H1 (cell line): ENCODE measurements at regions of chr15 and their contacts with region 1.

Region 1: DNA sequence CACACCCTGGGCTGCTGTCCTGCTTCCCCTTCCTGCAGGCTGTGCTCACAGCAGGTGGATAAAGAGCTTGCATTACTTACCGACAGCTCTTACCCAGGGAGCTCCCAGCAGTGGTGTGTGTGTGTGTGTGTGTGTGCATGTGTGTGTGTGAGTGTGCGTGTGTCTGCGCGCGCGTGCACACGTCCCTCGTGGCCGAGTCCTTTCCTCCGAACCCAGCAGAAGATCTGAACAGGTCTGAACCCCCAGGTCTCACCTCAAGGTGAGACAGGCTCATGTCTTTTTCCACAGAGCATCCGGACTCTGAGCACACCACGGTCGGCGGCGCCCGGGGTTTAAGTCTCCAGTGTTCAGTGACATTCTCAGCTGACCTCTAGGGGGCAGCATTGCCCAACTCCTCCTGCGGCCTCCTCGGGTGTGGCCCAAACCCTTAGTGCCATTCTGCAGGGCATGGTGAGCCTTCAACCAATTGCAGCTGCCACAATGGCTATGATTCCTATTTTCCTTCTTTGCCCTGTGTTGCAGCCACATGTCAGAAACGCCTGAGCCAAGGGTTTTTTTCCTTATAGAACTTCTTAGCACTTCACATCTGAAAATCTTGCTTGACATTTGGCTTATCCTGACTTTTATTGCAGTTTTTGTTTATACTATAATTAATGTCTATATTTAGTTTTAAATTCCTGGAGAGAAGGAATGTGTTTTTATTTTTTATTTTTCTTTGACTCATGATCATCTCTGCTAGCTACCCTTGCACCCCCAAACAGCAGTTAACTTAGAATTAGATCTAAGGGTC is 64.1 kb upstream of the KLHL25 start:
- DNase-seq: peak; percentile 53 to 90
- H3K4me3 ChIP-seq: peak overlapping the region; percentile 12 to 52 (median 34); a peak in 6 of 8 replicates
- H3K27ac ChIP-seq: no peak overlapping the region
- H3K4me1 ChIP-seq: peaks cover 0 to 9% (median 1%) of the 10 kb centered on the region in 4 experiments; a peak in 4 of 7 replicates
- H3K27me3 ChIP-seq: no peaks in the 10 kb centered on the region
- CTCF ChIP-seq: peak; percentile 80 to 86 (median 86)
- EP300 ChIP-seq: no peak
- POLR2A ChIP-seq: no peak
- RAD21 ChIP-seq: peak; percentile 86 to 89

Region 2: DNA sequence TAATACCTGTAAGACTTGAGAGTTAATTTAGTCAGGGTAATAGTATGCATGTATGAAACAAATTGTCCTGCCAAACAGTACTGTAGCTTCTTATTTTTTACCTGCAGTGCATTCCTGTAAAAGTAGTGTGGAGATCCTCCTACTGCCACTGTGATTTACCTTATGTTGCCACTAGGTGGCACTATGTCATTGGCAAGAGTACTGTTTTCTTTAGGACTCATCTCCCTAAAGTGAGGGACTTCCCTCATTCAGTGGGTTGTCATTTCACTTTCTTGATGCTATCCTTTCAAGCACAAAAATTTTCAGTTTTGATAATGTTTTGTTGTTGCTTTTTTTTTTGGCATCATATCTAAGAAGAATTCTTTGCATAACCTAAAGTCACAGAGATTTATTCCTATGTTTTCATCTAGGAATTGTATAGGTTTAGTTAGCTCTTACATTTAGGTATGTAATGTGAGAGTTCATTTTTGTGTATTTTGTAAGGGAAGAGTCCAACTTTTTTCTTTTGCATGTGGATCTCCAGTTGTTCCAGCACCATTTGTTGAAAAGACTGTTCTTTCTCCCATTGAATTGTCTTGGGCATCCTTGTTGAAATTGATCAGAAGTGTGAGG is 372.7 kb before region 1 on chr15:
- CTCF ChIA-PET with region 1: no interaction called
- POLR2A ChIA-PET with region 1: no interaction called
- DNase-seq: peak in 1 of 2 experiments; percentile 69
- H3K4me3 ChIP-seq: no peak overlapping the region
- H3K27ac ChIP-seq: no peak overlapping the region
- H3K4me1 ChIP-seq: peaks cover 0 to 4% (median 0%) of the 10 kb centered on the region in 4 experiments; a peak in 2 of 7 replicates
- H3K27me3 ChIP-seq: no peaks in the 10 kb centered on the region
- CTCF ChIP-seq: peak in 2 of 3 experiments; percentile 68 to 72; a peak in 3 of 4 replicates
- EP300 ChIP-seq: no peak
- POLR2A ChIP-seq: no peak
- RAD21 ChIP-seq: peak; percentile 77 to 82

Region 3: DNA sequence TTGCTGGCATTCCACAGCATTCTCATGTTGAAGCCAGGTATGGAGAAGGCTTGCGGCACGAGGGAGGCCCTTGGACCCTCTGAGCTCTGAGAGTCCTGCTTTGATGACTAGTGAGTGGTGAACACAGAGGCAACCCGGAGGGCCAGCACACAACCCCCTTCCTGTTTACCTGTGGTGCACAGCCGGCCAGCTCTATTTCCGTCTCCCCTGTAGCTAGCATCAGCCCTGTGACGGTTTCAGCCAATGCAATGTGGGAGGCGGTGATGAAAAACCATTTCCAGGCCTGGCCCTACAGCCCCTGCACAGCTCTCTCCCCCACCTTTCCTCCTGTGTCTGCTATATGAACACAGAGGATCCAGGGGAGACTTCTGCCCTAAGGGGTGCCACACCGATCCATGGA is 12.8 kb after region 1 on chr15:
- CTCF ChIA-PET with region 1: interaction called, 25 read pairs
- POLR2A ChIA-PET with region 1: no interaction called
- DNase-seq: no peak
- H3K4me3 ChIP-seq: no peak overlapping the region
- H3K27ac ChIP-seq: no peak overlapping the region
- H3K4me1 ChIP-seq: no peaks in the 10 kb centered on the region
- H3K27me3 ChIP-seq: no peaks in the 10 kb centered on the region
- CTCF ChIP-seq: no peak
- EP300 ChIP-seq: no peak
- POLR2A ChIP-seq: no peak
- RAD21 ChIP-seq: no peak

Region 4: GRCh38 chr15:86014016-86014415 is 155.2 kb after region 1 on chr15:
- CTCF ChIA-PET with region 1: no interaction called
- POLR2A ChIA-PET with region 1: no interaction called
- DNase-seq: no peak
- H3K4me3 ChIP-seq: no peak overlapping the region
- H3K27ac ChIP-seq: no peak overlapping the region
- H3K4me1 ChIP-seq: no peaks in the 10 kb centered on the region
- H3K27me3 ChIP-seq: no peaks in the 10 kb centered on the region; a peak in 1 of 7 replicates
- CTCF ChIP-seq: no peak
- EP300 ChIP-seq: no peak
- POLR2A ChIP-seq: no peak
- RAD21 ChIP-seq: no peak

Region 5: GRCh38 chr15:86231864-86232721 is 373.3 kb after region 1 on chr15:
- CTCF ChIA-PET with region 1: interaction called, 16 read pairs
- POLR2A ChIA-PET with region 1: no interaction called
- DNase-seq: peak in 1 of 2 experiments; percentile 66
- H3K4me3 ChIP-seq: peak overlapping the region in 1 of 4 experiments; percentile 45; a peak in 3 of 8 replicates
- H3K27ac ChIP-seq: no peak overlapping the region
- H3K4me1 ChIP-seq: peaks cover 8 to 14% (median 11%) of the 10 kb centered on the region in 4 experiments
- H3K27me3 ChIP-seq: no peaks in the 10 kb centered on the region; a peak in 1 of 7 replicates
- CTCF ChIP-seq: peak; percentile 58 to 74 (median 69)
- EP300 ChIP-seq: peak in 1 of 2 experiments; percentile 22; a peak in 1 of 3 replicates
- POLR2A ChIP-seq: no peak
- RAD21 ChIP-seq: peak; percentile 85 to 89